H1 (cell line): ENCODE measurements at regions of chr2 and their contacts with region 1.

Region 1: GRCh38 chr2:178804791-178805190 is 2.4 kb downstream of the TTN start:
- DNase-seq: no peak
- H3K4me3 ChIP-seq: no peak overlapping the region
- H3K27ac ChIP-seq: no peak overlapping the region
- H3K4me1 ChIP-seq: no peaks in the 10 kb centered on the region
- H3K27me3 ChIP-seq: no peaks in the 10 kb centered on the region
- CTCF ChIP-seq: peak in 2 of 3 experiments; percentile 18 to 78; a peak in 2 of 4 replicates
- EP300 ChIP-seq: no peak
- POLR2A ChIP-seq: no peak
- RAD21 ChIP-seq: no peak; a peak in 1 of 4 replicates

Region 2: DNA sequence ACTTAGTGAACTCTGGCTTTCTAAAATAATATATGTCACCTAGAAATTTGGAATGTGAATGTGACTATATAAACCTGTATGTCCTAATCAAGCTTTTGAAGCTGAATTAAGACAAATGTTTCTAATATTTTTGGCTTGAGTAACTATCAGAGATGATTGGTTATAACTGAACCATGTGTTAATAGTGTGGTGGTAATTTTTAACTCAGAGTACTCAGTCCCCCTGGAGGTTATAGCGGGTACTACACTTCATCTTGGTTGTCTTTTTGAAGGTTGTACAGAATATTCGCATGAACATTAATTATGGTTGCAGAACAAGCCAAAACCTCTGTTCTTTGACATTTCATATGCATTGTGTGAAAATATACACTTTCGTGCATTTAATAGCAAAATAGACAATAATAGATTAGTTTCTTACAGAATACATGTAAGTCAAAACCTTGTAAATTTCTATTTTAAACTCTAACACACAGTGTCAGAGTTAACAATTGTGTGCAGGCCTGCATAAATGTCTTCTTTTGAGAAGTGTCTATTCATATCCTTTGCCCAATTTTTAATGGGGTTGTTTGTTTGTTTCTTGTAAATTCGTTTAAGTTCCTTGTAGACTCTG is 524.4 kb before region 1 on chr2:
- CTCF ChIA-PET with region 1: no interaction called
- POLR2A ChIA-PET with region 1: no interaction called
- DNase-seq: no peak
- H3K4me3 ChIP-seq: no peak overlapping the region
- H3K27ac ChIP-seq: no peak overlapping the region
- H3K4me1 ChIP-seq: peaks cover 0 to 10% (median 2%) of the 10 kb centered on the region in 4 experiments; a peak in 4 of 7 replicates
- H3K27me3 ChIP-seq: no peaks in the 10 kb centered on the region
- CTCF ChIP-seq: peak in 2 of 3 experiments; percentile 35 to 59; a peak in 2 of 4 replicates
- EP300 ChIP-seq: no peak
- POLR2A ChIP-seq: no peak
- RAD21 ChIP-seq: peak; percentile 52 to 56

Region 3: DNA sequence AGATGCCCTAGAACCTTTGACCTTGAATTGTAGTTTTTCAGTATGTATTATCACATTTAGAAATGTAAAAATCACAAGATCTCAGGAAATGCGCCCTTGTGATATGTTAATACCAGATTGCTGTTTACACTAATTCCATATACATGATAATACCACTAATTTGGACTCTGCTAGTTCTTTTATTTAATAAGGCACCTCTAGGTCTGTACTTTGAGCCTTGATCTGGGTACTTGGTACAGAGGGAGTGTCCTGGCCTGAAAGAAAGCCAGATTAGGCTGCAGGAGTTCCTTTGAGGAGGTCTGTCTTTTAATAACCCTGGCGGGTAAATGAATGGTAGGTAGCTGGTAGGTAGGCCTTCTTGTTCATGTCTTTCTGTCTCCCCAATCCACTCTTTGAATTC is 298.3 kb before region 1 on chr2:
- CTCF ChIA-PET with region 1: no interaction called
- POLR2A ChIA-PET with region 1: no interaction called
- DNase-seq: no peak
- H3K4me3 ChIP-seq: no peak overlapping the region
- H3K27ac ChIP-seq: no peak overlapping the region
- H3K4me1 ChIP-seq: peaks cover 0 to 3% (median 0%) of the 10 kb centered on the region in 4 experiments; a peak in 2 of 7 replicates
- H3K27me3 ChIP-seq: no peaks in the 10 kb centered on the region
- CTCF ChIP-seq: no peak
- EP300 ChIP-seq: no peak
- POLR2A ChIP-seq: no peak
- RAD21 ChIP-seq: no peak

Region 4: DNA sequence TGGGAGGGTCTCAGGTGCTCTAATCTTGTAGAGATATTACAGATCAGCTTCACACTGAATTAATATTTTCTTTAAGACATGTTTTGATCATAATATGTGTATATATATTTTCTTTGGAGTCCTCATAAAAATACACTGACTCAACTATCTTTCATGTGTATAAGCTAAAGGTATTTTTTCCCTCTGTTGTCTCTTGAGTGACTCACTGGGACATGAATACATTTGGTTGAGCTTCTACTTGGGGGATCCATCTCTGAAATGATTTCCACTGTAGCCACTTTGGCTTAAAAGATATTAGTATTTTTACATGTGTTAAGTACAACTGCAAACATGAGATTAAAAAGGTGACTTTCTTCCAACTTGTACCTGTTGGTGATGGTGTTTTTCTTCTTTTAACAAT is 138.3 kb before region 1 on chr2:
- CTCF ChIA-PET with region 1: no interaction called
- POLR2A ChIA-PET with region 1: no interaction called
- DNase-seq: no peak
- H3K4me3 ChIP-seq: no peak overlapping the region
- H3K27ac ChIP-seq: no peak overlapping the region
- H3K4me1 ChIP-seq: no peaks in the 10 kb centered on the region
- H3K27me3 ChIP-seq: no peaks in the 10 kb centered on the region
- CTCF ChIP-seq: no peak
- EP300 ChIP-seq: no peak
- POLR2A ChIP-seq: no peak
- RAD21 ChIP-seq: no peak

Region 5: GRCh38 chr2:178731300-178731699 is 73.5 kb before region 1 on chr2:
- CTCF ChIA-PET with region 1: no interaction called
- POLR2A ChIA-PET with region 1: no interaction called
- DNase-seq: no peak
- H3K4me3 ChIP-seq: no peak overlapping the region
- H3K27ac ChIP-seq: no peak overlapping the region
- H3K4me1 ChIP-seq: no peaks in the 10 kb centered on the region
- H3K27me3 ChIP-seq: no peaks in the 10 kb centered on the region
- CTCF ChIP-seq: no peak
- EP300 ChIP-seq: no peak
- POLR2A ChIP-seq: no peak
- RAD21 ChIP-seq: no peak

Region 6: GRCh38 chr2:178819992-178820391 is 15.2 kb after region 1 on chr2:
- CTCF ChIA-PET with region 1: interaction called, 17 read pairs
- POLR2A ChIA-PET with region 1: no interaction called
- DNase-seq: no peak
- H3K4me3 ChIP-seq: no peak overlapping the region
- H3K27ac ChIP-seq: no peak overlapping the region
- H3K4me1 ChIP-seq: no peaks in the 10 kb centered on the region
- H3K27me3 ChIP-seq: no peaks in the 10 kb centered on the region
- CTCF ChIP-seq: no peak
- EP300 ChIP-seq: no peak
- POLR2A ChIP-seq: no peak
- RAD21 ChIP-seq: no peak

Region 7: DNA sequence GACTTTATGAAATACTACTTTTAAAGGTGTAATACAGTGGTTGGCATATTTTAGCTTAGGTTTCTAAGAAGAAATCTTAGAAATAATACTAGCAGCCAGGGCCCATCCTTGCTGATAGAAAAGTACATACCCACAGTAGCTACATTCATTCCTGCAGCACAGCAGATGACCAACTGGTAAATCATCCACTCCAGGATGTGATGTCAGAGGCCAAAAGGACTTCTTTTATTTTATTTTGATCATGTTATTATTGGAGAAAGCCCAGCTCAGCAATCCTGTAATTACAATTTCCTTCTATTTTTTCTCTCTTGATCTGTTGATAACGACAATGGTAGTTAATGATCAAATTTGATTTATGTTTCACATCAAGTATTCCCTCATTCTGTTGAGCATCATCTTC is 20.4 kb after region 1 on chr2:
- CTCF ChIA-PET with region 1: interaction called, 17 read pairs
- POLR2A ChIA-PET with region 1: no interaction called
- DNase-seq: no peak
- H3K4me3 ChIP-seq: no peak overlapping the region
- H3K27ac ChIP-seq: no peak overlapping the region
- H3K4me1 ChIP-seq: peaks cover 0 to 3% (median 0%) of the 10 kb centered on the region in 4 experiments; a peak in 1 of 7 replicates
- H3K27me3 ChIP-seq: no peaks in the 10 kb centered on the region
- CTCF ChIP-seq: no peak
- EP300 ChIP-seq: no peak
- POLR2A ChIP-seq: no peak
- RAD21 ChIP-seq: no peak